HAP-1 (cell line): ENCODE measurements at regions of chr11 and their contacts with region 1.

Region 1: DNA sequence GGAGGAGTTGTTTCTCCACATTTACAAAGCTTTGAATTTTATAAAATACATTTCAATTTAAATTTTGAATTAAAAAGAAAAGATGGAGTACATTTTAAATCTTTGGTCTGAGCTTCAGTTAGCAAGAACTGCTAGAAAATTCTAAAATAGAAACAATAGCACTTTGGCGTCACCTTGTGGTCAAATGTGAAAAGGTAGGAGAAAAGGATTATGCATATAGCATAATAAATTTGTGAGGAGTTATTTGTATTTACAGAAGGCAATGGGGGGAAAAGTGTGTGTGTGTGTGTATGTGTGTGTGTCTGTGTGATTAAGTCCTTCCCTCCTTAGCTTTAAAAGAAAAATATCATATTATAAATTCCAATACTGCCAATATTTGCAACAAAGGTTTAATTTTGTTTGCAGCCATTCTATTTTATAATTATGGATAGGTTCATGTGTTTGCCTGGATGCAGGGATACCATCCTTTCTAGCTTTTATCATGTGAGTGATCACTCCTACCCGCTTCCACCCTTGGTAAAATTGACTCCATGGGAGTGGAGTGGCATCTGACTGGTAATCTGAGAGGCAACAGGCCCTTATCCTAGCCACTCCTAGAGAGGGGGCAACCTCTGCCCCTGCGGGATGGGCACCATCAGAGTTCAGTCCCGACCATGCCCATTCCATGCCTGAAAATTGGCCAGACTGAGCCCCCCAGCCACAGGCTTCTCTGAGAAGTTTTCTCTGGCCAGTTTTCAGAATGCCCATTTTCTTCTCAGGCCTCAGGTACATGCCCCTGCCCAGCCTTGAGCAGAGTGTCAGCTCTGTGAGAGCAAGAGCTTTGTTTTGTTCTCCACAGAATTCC is 13.6 kb upstream of the LGR4 start:
- DNase-seq: peak; percentile 70 to 78
- H3K4me3 ChIP-seq: no peak overlapping the region
- H3K4me1 ChIP-seq: 0 out of 2 replicates have a peak, but pooled peaks cover 4% of the 10 kb centered on the region
- H3K27me3 ChIP-seq: no peaks in the 10 kb centered on the region

Region 2: DNA sequence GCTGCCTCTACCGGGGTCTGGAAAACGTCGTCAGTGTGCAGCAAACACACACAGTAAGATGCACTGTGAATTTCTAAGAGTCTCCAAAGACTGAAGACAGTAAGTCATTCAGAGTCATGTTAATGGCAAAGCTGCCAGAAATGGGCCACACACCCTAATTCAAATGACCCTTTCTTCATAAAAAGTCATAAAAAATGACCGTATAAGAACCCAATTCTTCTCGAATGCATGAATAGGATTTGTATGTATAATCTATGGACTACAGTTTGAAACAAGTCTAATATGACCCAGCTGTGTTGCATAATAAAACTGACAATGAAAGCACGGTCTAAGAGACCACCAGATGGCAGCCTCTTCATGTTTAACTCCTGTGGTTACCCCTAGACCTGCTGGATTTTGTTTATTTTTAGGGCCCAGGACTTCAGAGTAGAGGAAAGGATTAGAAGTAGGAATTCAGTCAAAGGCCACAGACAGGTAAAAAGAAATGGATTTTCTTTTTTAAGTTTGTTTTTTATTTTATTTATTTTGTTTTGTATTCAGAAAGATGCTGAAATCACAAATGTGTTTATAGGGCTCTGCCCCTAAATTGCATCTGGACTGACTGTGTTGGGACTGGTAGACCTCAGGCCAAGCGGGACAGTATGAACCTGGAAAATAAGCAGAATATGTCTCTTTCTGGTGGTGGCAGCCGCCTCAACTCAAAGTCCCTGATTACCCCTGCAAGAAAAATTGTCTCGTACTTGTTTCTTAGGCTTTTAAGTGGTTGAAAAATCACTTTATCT is 732.2 kb before region 1 on chr11:
- in situ Hi-C with region 1: loop called (anchors 25 kb)
- DNase-seq: peak; percentile 27 to 37
- H3K4me3 ChIP-seq: no peak overlapping the region
- H3K4me1 ChIP-seq: no peaks in the 10 kb centered on the region
- H3K27me3 ChIP-seq: no peaks in the 10 kb centered on the region; the same call in 1 of the 2 replicates